Left lung (tissue), 14 donors: ENCODE measurements at regions of chr11 and their contacts with region 1.

Region 1: DNA sequence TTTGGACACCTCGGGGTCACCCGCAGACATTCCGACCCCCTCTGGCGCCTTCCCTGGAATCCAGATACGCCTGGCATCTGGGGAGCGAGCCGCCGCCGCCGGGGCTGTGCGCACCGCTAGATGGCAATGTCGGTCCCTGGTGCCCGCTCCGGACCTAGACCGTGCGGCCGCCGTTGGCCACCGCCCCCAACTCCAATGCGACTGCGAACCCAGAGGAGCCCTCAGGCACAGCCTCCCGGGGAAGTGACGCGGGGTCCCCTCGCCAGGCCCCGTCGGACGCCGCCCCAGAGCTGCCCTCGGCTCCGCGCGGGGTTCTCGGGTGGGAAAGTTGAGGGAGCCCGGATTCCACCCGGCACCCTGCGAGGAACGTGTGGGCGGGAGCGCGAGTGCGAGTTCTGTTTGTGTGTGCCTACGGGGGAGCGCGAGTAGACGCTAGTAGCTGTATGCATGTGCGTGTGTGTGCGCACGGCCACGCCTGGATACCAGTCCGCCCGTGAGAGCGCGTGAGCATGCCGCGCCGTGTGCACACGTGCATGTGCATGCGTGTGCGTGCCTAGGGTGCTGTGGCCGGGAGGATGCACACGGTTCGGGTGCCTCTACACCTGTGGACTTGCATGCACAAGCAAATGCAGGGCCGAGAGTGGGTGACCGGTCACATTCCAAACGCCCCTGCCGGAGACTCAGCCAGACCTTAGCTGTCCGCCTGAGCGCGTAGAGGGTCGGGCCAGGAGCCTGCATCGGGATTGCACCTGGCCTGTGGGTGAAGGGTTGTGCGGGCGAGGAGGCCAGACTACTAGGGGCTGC is 1.9 kb downstream of the CHRM4 start:
- DNase-seq: peak in 3 of 4 donors; percentile 68 to 93 (median 74)
- ATAC-seq: peak; percentile 81
- H3K4me3 ChIP-seq: peak overlapping the region; percentile 18 to 27
- H3K27ac ChIP-seq: no peak overlapping the region
- H3K4me1 ChIP-seq: peaks cover 20 to 45% of the 10 kb centered on the region in 2 donors
- H3K27me3 ChIP-seq: peaks cover 48 to 93% of the 10 kb centered on the region in 2 donors
- CTCF ChIP-seq: peak; percentile 80 to 81

Region 2: GRCh38 chr11:46537537-46538295 is 148.1 kb after region 1 on chr11:
- intact Hi-C with region 1: loop called in 1 of 2 experiments (anchors 5 kb)
- DNase-seq: peak in 3 of 4 donors; percentile 42 to 72 (median 56)
- ATAC-seq: peak; percentile 73
- H3K4me3 ChIP-seq: no peak overlapping the region
- H3K27ac ChIP-seq: no peak overlapping the region
- H3K4me1 ChIP-seq: peaks cover 0 to 40% of the 10 kb centered on the region in 2 donors
- H3K27me3 ChIP-seq: no peaks in the 10 kb centered on the region
- CTCF ChIP-seq: peak; percentile 76